ENCODE measurements at regions of chr13 and their contacts with region 1.

Region 1: GRCh38 chr13:27362064-27362883 is 62.1 kb upstream of the GTF3A start:
- DNase-seq: peak; percentile 89
- ATAC-seq: peak; percentile 96
- H3K4me3 Mint-ChIP-seq: peak overlapping the region; percentile 50
- H3K27ac Mint-ChIP-seq: no peak overlapping the region
- H3K4me1 Mint-ChIP-seq: peaks cover 9% of the 10 kb centered on the region
- H3K27me3 Mint-ChIP-seq: peaks cover 31% of the 10 kb centered on the region

Region 2: GRCh38 chr13:26831336-26831908 is 530.9 kb before region 1 on chr13:
- CTCF ChIA-PET with region 1: no interaction called
- DNase-seq: no peak
- ATAC-seq: no peak
- H3K4me3 Mint-ChIP-seq: no peak overlapping the region
- H3K27ac Mint-ChIP-seq: no peak overlapping the region
- H3K4me1 Mint-ChIP-seq: no peaks in the 10 kb centered on the region
- H3K27me3 Mint-ChIP-seq: peaks cover 18% of the 10 kb centered on the region

Region 3: DNA sequence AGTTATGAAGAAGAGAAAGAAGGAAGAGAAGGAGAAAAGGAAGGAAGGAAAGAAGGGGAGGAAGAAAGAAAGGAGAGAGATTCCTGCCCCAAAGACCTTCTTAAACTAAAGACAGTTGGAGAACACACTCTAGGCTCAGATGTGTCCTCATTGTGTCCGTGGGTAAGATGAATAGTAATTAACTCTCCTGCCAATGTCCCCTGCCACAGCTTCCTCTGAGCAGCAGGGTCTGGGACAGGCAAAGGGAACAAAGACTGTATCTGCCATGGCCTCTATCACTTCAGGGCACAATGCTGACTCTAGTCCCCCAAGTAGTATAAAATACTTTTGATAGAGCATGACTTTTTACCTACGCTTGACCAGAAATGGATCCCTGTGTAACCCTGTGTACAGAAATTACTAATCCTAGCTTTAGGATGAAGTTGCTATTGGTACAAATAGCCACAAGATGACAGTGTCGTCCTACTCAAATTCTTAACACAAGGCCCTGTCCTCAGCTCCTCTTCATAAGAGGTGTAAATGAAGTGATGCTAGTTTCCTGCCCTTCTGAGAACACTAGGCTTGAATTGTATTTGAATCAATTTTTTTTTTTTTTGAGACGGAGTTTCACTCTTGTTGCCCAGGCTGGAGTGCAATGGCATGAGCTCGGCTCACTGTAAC is 415.5 kb before region 1 on chr13:
- CTCF ChIA-PET with region 1: interaction called, 23 read pairs
- DNase-seq: no peak
- ATAC-seq: peak; percentile 78
- H3K4me3 Mint-ChIP-seq: no peak overlapping the region
- H3K27ac Mint-ChIP-seq: no peak overlapping the region
- H3K4me1 Mint-ChIP-seq: peaks cover 9% of the 10 kb centered on the region
- H3K27me3 Mint-ChIP-seq: peaks cover 6% of the 10 kb centered on the region

Region 4: DNA sequence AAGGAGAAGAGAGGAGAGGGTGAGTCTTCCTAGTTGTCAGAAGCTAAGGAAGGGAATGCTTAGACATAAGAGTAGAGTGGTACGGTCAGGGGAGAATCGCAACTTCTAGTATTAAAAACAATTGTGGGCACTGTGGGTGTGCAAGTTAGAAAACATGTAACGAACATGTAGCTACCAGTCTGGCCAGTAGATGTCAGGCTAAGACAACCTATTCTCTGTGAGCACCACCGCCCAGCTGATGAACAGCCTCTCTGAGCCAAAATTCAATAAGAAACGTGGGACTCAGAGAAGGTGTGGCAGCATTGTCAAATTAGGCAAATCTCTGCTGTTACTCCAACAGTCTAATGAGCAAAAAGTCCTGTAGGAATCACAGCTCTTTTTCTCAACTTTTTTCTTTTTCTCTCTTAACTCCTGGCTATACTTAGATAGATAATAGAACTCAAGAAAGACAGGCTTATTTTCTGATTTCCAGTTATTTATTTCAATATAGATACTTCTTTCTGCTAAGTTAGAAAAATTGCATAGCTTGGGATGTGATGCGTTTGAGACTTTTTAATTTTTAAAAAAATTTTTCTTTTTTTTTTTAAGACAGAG is 376.9 kb before region 1 on chr13:
- CTCF ChIA-PET with region 1: interaction called, 195 read pairs
- DNase-seq: peak; percentile 86
- ATAC-seq: peak; percentile 91
- H3K4me3 Mint-ChIP-seq: no peak overlapping the region
- H3K27ac Mint-ChIP-seq: no peak overlapping the region
- H3K4me1 Mint-ChIP-seq: peaks cover 21% of the 10 kb centered on the region
- H3K27me3 Mint-ChIP-seq: peaks cover 17% of the 10 kb centered on the region

Region 5: GRCh38 chr13:27374650-27375049 is 12.4 kb after region 1 on chr13:
- CTCF ChIA-PET with region 1: interaction called, 63 read pairs
- DNase-seq: peak; percentile 73
- ATAC-seq: peak; percentile 88
- H3K4me3 Mint-ChIP-seq: no peak overlapping the region
- H3K27ac Mint-ChIP-seq: no peak overlapping the region
- H3K4me1 Mint-ChIP-seq: peaks cover 15% of the 10 kb centered on the region
- H3K27me3 Mint-ChIP-seq: peaks cover 10% of the 10 kb centered on the region

Region 6: GRCh38 chr13:27449936-27450828 is 87.9 kb after region 1 on chr13 and contains the start of gene MTIF3:
- CTCF ChIA-PET with region 1: interaction called, 13 read pairs
- DNase-seq: peak; percentile 98
- ATAC-seq: peak; percentile 91
- H3K4me3 Mint-ChIP-seq: peak within 1 kb of the TSS; percentile 87
- H3K27ac Mint-ChIP-seq: peak within 1 kb of the TSS; percentile 98
- H3K4me1 Mint-ChIP-seq: peaks cover 54% of the 10 kb centered on the region
- H3K27me3 Mint-ChIP-seq: no peaks in the 10 kb centered on the region
- total RNA-seq, gene MTIF3: 41.2 to 47.3 TPM